ENCODE measurements at regions of chr13 and their contacts with region 1.

Region 1: GRCh38 chr13:48094781-48095502 is at the start of gene MED4:
- DNase-seq: peak; percentile 98
- ATAC-seq: peak; percentile 97
- H3K4me3 Mint-ChIP-seq: peak within 1 kb of the TSS; percentile 96
- H3K27ac Mint-ChIP-seq: peak within 1 kb of the TSS; percentile 95
- H3K4me1 Mint-ChIP-seq: peaks cover 40% of the 10 kb centered on the region
- H3K27me3 Mint-ChIP-seq: peaks cover 3% of the 10 kb centered on the region
- total RNA-seq, gene MED4: 65.3 to 65.5 TPM

Region 2: GRCh38 chr13:47519626-47520025 is 575.3 kb before region 1 on chr13:
- CTCF ChIA-PET with region 1: no interaction called
- POLR2A ChIA-PET with region 1: no interaction called
- DNase-seq: no peak
- ATAC-seq: no peak
- H3K4me3 Mint-ChIP-seq: no peak overlapping the region
- H3K27ac Mint-ChIP-seq: no peak overlapping the region
- H3K4me1 Mint-ChIP-seq: no peaks in the 10 kb centered on the region
- H3K27me3 Mint-ChIP-seq: no peaks in the 10 kb centered on the region

Region 3: GRCh38 chr13:48043789-48044503 is 51.0 kb before region 1 on chr13:
- CTCF ChIA-PET with region 1: interaction called, 54 read pairs
- POLR2A ChIA-PET with region 1: interaction called, 27 read pairs
- DNase-seq: no peak
- ATAC-seq: peak; percentile 79
- H3K4me3 Mint-ChIP-seq: peak overlapping the region; percentile 39
- H3K27ac Mint-ChIP-seq: peak overlapping the region; percentile 88
- H3K4me1 Mint-ChIP-seq: peaks cover 35% of the 10 kb centered on the region
- H3K27me3 Mint-ChIP-seq: no peaks in the 10 kb centered on the region

Region 4: DNA sequence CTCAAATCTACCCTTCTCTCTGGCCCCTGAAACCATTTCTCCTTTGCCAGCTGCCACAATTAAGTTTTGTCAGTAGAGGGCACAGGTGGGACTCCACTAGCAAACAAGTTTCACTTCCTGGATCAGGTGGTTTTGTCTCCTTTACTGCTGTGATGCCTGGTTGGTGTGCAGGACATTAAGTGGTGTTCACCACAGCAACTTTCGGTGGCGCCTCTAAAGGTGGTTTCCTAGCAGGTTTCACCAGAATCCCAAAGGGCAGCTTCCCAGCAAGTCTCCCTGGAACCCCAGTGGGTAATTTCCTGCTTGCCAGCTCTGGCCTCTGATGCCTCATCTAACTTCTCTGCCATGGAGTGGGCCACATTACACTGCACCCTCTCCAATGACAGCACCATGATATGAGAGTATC is 16.7 kb before region 1 on chr13:
- CTCF ChIA-PET with region 1: interaction called, 37 read pairs
- POLR2A ChIA-PET with region 1: interaction called, 12 read pairs
- DNase-seq: peak; percentile 67
- ATAC-seq: peak; percentile 93
- H3K4me3 Mint-ChIP-seq: no peak overlapping the region
- H3K27ac Mint-ChIP-seq: peak overlapping the region; percentile 77
- H3K4me1 Mint-ChIP-seq: peaks cover 12% of the 10 kb centered on the region
- H3K27me3 Mint-ChIP-seq: no peaks in the 10 kb centered on the region

Region 5: DNA sequence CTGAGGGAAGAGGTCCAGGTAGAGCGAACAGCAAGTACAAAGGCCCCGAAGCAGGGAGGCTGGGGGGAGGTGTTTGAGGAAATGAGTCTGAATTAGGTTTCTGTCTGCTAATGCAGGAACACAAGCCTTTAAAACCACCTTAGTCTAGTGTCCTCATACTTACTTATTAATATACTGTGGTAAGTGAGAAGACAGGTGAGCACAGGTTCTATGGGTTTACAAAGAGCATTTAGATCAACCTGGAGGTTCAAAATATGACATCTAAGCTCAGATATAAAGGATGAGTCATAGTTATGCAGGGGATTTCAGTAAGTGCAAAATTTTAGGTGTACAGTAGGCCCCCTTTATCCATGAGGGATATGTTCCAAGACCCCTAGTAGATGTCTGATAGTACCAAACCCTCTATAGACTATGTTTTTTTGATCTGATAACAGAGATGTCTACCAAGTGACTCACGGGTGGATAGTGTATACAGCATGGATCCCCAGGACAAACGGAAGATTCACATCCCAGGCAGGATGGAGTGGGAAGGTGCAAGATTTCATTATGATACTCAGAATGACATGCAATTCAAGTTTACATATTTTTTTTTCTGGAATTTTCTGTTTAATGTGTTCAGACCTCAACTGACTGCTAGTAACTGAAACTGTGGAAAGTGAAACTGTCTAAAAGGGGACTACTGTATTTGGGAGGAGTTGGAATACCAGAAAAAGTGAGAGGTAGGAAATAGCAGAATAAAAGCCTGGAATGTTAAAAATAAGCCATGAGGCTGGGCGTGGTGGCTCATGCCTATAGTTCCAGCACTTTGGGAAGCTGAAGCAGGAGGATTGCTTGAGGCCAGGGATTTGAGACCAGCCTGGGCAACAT is 18.2 kb after region 1 on chr13:
- CTCF ChIA-PET with region 1: interaction called, 15 read pairs
- POLR2A ChIA-PET with region 1: interaction called, 4 read pairs
- DNase-seq: no peak
- ATAC-seq: no peak
- H3K4me3 Mint-ChIP-seq: no peak overlapping the region
- H3K27ac Mint-ChIP-seq: no peak overlapping the region
- H3K4me1 Mint-ChIP-seq: peaks cover 2% of the 10 kb centered on the region
- H3K27me3 Mint-ChIP-seq: peaks cover 28% of the 10 kb centered on the region